ENCODE measurements at regions of chr9 and their contacts with region 1.

Region 1: GRCh38 chr9:130707225-130707976 is 13.8 kb downstream of the EXOSC2 start:
- DNase-seq: peak in 3 of 5 donors; percentile 61 to 77 (median 71)
- ATAC-seq: peak in 1 of 4 donors; percentile 27
- H3K4me3 ChIP-seq: no peak overlapping the region
- H3K27ac ChIP-seq: no peak overlapping the region
- H3K4me1 ChIP-seq: peaks cover 0 to 9% (median 0%) of the 10 kb centered on the region in 12 donors
- H3K27me3 ChIP-seq: no peaks in the 10 kb centered on the region
- CTCF ChIP-seq: peak; percentile 65 to 85 (median 82)
- POLR2A ChIP-seq: no peak

Region 2: GRCh38 chr9:130770679-130771442 is 63.5 kb after region 1 on chr9:
- intact Hi-C with region 1: loop called in 6 of 10 experiments (anchors 5 to 10 kb)
- DNase-seq: no peak
- ATAC-seq: peak; percentile 38 to 77 (median 76)
- H3K4me3 ChIP-seq: no peak overlapping the region
- H3K27ac ChIP-seq: no peak overlapping the region
- H3K4me1 ChIP-seq: peaks cover 0 to 36% (median 20%) of the 10 kb centered on the region in 12 donors
- H3K27me3 ChIP-seq: no peaks in the 10 kb centered on the region
- CTCF ChIP-seq: peak; percentile 49 to 80 (median 68)
- POLR2A ChIP-seq: peak in 1 of 2 donors; percentile 25